Tibial artery (tissue), 4 donors: ENCODE measurements at regions of chr13 and their contacts with region 1.

Region 1: DNA sequence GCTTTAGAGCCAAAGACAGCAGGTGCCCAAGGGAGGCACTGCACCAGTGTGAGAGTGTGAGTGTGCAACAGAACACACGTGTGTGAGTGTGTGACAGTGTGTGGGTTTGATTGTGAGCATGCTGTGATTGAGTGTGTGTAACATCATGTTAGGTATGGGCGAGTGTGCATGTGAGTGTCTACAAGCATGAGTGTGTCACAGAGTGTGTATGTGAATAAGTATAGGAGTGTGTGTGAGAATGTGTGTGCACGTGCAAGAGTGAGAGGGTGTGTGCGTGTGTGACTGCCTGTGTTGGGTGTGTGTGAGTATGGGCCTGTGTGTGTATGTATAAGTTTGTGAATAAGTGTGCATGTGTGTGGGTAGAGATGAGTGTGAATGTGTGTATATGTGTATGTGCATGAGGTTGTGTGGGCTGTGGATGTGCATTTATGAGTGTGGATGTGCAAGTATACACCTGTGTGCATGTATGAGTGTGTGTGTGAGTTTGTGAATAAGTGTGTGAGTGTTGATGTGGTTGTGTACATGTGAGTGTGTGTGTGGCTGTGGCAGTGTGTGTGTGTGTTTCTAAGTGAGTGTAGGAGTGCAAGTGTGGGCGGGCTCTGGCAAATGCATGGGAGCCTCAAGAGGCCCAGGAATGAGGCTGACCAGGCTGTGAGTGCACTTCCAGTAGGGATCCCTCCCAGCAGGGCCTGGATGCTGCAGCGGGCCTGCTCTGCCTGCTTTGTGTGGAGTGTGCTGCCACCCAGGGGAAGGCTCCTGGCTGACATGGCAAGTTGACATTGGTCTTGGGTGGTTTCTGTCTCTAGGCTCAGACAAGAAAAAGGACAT is 198.4 kb downstream of the COL4A1 start:
- DNase-seq: peak; percentile 80 to 91
- H3K4me3 ChIP-seq: no peak overlapping the region
- H3K27ac ChIP-seq: peak overlapping the region; percentile 69 to 73
- H3K4me1 ChIP-seq: peaks cover 0 to 44% (median 23%) of the 10 kb centered on the region in 4 donors
- H3K27me3 ChIP-seq: no peaks in the 10 kb centered on the region
- CTCF ChIP-seq: peak; percentile 65 to 80

Region 2: DNA sequence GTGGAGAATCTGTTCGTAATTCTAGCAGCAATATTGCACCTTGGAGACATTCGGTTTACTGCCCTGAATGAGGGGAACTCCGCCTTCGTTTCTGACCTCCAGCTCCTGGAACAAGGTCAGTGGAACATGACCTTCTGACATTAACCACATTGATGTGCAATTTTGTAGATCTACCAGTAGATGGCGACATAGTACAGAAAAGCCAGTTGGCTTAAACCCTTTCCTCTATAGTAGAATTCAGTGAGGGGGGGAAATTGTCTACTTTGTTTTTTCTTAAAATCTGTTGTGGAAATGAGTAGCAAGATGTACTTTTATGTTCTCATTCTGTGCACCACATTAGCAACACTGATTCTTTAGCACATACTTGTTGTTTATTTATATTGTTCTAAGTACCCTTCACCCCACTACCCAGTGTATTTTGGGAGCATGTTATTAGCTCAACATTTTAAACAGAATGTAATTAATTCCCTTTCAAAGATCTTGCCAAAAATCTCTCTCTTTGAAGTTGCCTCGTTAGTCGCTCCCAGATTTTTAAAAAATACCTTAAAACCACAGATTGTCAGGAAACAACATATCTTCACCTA is 1146.9 kb before region 1 on chr13:
- intact Hi-C with region 1: loop called (anchors 5 kb)
- DNase-seq: no peak
- H3K4me3 ChIP-seq: no peak overlapping the region
- H3K27ac ChIP-seq: no peak overlapping the region
- H3K4me1 ChIP-seq: peaks cover 0 to 27% (median 6%) of the 10 kb centered on the region in 4 donors
- H3K27me3 ChIP-seq: no peaks in the 10 kb centered on the region
- CTCF ChIP-seq: peak; percentile 84 to 85

Region 3: GRCh38 chr13:110062077-110062776 is 46.3 kb before region 1 on chr13:
- intact Hi-C with region 1: no loop called
- DNase-seq: no peak
- H3K4me3 ChIP-seq: no peak overlapping the region
- H3K27ac ChIP-seq: no peak overlapping the region
- H3K4me1 ChIP-seq: peaks cover 0 to 11% (median 3%) of the 10 kb centered on the region in 4 donors
- H3K27me3 ChIP-seq: no peaks in the 10 kb centered on the region
- CTCF ChIP-seq: no peak